Activated CD8-positive, alpha-beta memory T cell treated with anti-CD3 and anti-CD28 coated beads, Interleukin-2, amount 10 ng/mL, durations not matched to agents 7 days and 5 days (primary cell): ENCODE measurements at regions of chr12 and their contacts with region 1.

Region 1: GRCh38 chr12:51217968-51218606 is at the start of gene POU6F1:
- DNase-seq: peak; percentile 74
- ATAC-seq: peak; percentile 84
- H3K4me3 Mint-ChIP-seq: peak within 1 kb of the TSS; percentile 87
- H3K27ac Mint-ChIP-seq: peak within 1 kb of the TSS; percentile 81
- H3K4me1 Mint-ChIP-seq: peaks cover 12% of the 10 kb centered on the region
- H3K27me3 Mint-ChIP-seq: no peaks in the 10 kb centered on the region
- total RNA-seq, gene POU6F1: 3.6 to 5.4 TPM

Region 2: GRCh38 chr12:51077971-51078370 is 140.1 kb before region 1 on chr12:
- CTCF ChIA-PET with region 1: no interaction called
- DNase-seq: no peak
- ATAC-seq: no peak
- H3K4me3 Mint-ChIP-seq: no peak overlapping the region
- H3K27ac Mint-ChIP-seq: no peak overlapping the region
- H3K4me1 Mint-ChIP-seq: peaks cover 32% of the 10 kb centered on the region
- H3K27me3 Mint-ChIP-seq: no peaks in the 10 kb centered on the region

Region 3: DNA sequence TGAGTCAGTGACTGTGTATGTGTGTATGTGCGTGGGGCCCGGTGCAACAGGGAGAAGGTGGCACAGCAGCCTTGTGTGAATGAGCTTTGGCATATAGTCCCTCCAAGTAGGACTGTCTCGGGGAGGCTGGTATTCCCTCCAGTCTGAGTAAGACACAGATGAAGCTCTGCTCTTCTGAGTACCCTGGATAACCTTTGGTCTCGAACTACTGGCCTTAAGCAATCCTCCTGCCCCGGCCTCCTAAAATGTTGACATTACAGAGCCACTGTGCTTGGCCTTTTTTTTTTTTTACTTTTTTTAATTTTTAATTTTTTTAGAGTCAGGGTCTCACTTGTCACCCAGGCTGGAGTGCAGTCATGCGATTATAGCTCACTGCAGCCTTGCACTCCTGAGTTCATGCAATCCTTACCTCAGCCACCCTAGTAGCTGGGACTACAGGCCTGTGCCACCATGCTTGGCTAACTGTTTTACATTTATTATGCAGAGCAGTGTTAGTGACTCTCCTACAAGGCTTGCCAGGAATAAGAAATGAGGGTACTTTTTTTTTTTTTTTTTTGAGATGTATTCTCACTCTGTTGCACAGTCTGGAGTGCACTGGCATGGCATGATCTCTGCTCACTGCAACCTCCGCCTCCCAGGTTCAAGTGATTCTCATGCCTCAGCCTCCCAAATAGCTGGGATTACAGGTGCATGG is 11.2 kb after region 1 on chr12:
- CTCF ChIA-PET with region 1: interaction called, 13 read pairs
- DNase-seq: no peak
- ATAC-seq: no peak
- H3K4me3 Mint-ChIP-seq: no peak overlapping the region
- H3K27ac Mint-ChIP-seq: no peak overlapping the region
- H3K4me1 Mint-ChIP-seq: peaks cover 2% of the 10 kb centered on the region
- H3K27me3 Mint-ChIP-seq: peaks cover 2% of the 10 kb centered on the region

Region 4: DNA sequence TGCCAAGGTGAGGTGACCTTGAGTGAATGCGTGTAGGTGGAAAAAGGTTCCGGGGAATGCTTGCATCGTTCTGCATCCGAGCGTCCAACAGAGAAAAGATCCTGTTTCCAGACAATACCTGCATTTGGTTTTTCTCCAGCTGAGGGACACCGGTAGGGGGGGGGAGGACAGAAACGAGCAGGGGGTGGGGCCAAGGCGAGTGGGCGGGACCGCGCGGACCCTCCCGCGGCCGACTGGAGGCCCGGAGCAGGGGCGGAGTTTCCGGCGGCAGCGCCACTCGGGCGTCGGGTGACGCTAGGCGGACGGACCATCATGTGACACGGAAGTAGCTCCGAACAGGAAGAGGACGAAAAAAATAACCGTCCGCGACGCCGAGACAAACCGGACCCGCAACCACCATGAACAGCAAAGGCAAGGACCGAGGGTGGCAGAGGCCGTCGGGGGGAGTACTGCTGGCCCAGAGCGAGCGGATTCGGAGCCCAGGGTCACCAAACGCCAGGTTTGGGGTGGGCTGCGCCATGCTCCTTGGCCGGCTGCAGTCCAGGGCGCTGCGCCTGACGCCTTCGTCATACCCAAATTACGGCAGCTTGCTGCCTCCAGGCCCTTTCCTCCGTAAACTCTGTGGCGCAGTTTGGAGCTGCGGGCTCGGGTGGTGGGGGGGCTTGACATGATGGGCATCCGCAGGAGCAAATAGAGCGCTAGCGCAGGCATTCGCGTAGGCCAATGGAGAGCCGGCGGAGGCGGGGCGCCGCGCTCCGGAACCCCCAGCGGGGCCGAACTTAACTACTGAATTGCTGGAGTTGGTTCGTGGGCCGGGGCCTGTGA is 20.6 kb after region 1 on chr12 and contains the start of gene DAZAP2:
- CTCF ChIA-PET with region 1: interaction called, 19 read pairs
- DNase-seq: peak; percentile 98
- ATAC-seq: peak; percentile 96
- H3K4me3 Mint-ChIP-seq: peak within 1 kb of the TSS; percentile 91
- H3K27ac Mint-ChIP-seq: peak within 1 kb of the TSS; percentile 98
- H3K4me1 Mint-ChIP-seq: peaks cover 35% of the 10 kb centered on the region
- H3K27me3 Mint-ChIP-seq: no peaks in the 10 kb centered on the region
- total RNA-seq, gene DAZAP2: 174 to 181 TPM